Activated B cell treated with CpG ODN at 0.5 μM for 24 hours (primary cell): ENCODE measurements at regions of chr7 and their contacts with region 1.

Region 1: GRCh38 chr7:73726083-73726466 is 6.6 kb upstream of the STX1A start:
- DNase-seq: no peak
- ATAC-seq: peak; percentile 10
- H3K4me3 Mint-ChIP-seq: no peak overlapping the region
- H3K27ac Mint-ChIP-seq: no peak overlapping the region
- H3K4me1 Mint-ChIP-seq: no peaks in the 10 kb centered on the region
- H3K27me3 Mint-ChIP-seq: peaks cover 13% of the 10 kb centered on the region
- CTCF ChIP-seq: no peak

Region 2: GRCh38 chr7:73606801-73607691 is 119.0 kb before region 1 on chr7:
- CTCF ChIA-PET with region 1: interaction called, 63 read pairs
- POLR2A ChIA-PET with region 1: no interaction called
- intact Hi-C with region 1: loop called (anchors 1 kb)
- DNase-seq: peak; percentile 66
- ATAC-seq: peak; percentile 67
- H3K4me3 Mint-ChIP-seq: no peak overlapping the region
- H3K27ac Mint-ChIP-seq: no peak overlapping the region
- H3K4me1 Mint-ChIP-seq: peaks cover 1% of the 10 kb centered on the region
- H3K27me3 Mint-ChIP-seq: peaks cover 39% of the 10 kb centered on the region
- CTCF ChIP-seq: no peak

Region 3: DNA sequence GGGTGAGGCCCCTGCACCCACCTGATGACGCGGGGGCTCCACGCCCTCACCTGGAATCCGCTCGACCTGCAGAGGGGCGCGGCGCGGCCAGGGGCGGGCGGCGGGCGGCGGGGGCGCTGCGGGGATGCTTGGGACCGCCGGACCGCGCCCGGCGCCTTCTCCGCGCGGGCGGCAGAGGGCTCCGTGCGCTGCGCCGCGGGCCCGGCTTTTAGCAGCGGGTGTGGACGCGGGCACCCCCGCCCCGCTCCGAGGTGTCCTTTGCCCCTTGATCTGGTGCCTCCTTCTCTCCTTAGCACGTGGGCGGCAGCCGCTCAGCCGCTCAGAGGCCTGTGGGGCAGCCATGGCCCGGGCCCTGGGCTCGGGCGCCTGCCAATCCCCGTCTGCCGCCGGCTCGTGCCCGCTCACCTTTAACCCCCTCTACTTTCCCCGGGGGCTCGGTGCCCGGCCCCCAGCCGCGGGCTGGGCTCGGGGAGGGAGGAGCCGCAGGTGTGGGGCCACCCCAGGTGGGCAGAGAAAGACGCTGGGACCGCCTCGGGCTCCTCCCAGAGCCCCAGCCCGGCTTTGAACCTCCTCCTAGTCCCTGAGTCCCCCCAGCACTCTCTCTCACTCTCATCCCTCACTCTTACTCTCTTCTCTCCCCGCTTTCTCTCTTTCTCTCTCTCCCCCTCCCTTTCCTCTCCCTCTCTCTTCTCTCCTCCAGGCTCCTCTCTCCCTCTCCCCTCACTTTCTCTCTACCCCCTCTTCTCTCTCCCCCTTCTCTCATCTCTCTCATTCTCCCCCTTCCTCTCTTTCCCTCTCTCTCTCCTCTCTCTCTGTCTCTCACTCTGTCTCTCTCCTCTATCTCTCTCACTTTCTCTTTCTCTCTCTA is 78.1 kb before region 1 on chr7:
- CTCF ChIA-PET with region 1: no interaction called
- POLR2A ChIA-PET with region 1: no interaction called
- intact Hi-C with region 1: loop called (anchors 2 kb)
- DNase-seq: no peak
- ATAC-seq: peak; percentile 71
- H3K4me3 Mint-ChIP-seq: peak overlapping the region; percentile 50
- H3K27ac Mint-ChIP-seq: no peak overlapping the region
- H3K4me1 Mint-ChIP-seq: peaks cover 7% of the 10 kb centered on the region
- H3K27me3 Mint-ChIP-seq: peaks cover 57% of the 10 kb centered on the region
- CTCF ChIP-seq: no peak